ENCODE measurements at regions of chr12 and their contacts with region 1.

Region 1: GRCh38 chr12:15584366-15585041 is 204.7 kb downstream of the EPS8 start:
- DNase-seq: peak; percentile 21
- CTCF ChIP-seq: peak; percentile 55

Region 2: GRCh38 chr12:15276088-15276698 is 308.3 kb before region 1 on chr12:
- CTCF ChIA-PET with region 1: interaction called, 28 read pairs
- POLR2A ChIA-PET with region 1: no interaction called
- DNase-seq: peak; percentile 22
- CTCF ChIP-seq: peak; percentile 54

Region 3: DNA sequence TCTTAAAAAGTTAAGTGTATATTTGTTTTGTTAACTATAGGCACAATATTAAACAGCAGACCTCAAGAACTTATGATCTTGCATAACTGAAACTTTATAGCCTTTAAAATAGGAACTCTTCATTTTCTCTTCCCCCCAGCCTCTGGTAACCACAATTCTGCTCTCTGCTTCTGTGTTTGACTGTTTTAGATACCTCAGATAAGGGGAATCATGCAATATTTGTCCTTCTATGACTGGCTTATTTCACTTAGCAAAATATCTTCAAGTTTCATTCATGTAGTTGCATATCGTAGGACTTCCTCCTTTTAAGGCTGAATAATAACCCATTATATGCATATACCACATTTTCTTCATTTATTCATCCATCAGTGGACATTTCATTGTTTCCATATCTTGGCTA is 130.9 kb before region 1 on chr12:
- CTCF ChIA-PET with region 1: no interaction called
- POLR2A ChIA-PET with region 1: no interaction called
- DNase-seq: no peak
- CTCF ChIP-seq: no peak

Region 4: DNA sequence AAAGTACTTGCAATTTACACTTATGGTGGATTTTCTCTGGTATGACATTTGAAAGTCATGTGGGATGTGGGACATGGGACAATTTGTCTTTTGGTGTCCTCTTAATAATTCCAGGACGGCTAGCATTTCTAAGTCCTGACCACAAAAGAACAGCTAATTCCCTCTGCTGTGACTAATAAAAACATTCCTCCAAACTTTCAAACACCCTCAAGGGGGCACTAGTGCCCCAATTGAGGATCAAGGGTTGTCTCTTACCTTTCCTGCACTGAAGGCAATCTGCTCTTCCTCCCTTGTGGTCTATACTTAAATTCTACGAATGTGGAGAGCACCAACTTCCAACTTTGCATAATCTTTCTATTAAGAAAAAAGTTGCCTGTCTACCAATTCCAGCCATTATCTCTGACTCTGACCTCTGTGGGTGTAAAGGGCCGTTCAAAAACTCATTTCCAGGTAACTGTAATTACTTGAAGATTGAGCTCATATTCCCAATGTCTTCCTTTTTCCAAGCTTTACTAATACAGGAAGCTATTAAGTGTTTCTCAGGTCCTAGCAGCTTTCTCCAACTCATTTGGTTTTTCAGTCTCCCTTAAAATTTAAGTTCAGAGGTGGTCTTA is 52.0 kb before region 1 on chr12:
- CTCF ChIA-PET with region 1: interaction called, 328 read pairs
- POLR2A ChIA-PET with region 1: no interaction called
- DNase-seq: peak; percentile 47
- CTCF ChIP-seq: peak; percentile 64

Region 5: DNA sequence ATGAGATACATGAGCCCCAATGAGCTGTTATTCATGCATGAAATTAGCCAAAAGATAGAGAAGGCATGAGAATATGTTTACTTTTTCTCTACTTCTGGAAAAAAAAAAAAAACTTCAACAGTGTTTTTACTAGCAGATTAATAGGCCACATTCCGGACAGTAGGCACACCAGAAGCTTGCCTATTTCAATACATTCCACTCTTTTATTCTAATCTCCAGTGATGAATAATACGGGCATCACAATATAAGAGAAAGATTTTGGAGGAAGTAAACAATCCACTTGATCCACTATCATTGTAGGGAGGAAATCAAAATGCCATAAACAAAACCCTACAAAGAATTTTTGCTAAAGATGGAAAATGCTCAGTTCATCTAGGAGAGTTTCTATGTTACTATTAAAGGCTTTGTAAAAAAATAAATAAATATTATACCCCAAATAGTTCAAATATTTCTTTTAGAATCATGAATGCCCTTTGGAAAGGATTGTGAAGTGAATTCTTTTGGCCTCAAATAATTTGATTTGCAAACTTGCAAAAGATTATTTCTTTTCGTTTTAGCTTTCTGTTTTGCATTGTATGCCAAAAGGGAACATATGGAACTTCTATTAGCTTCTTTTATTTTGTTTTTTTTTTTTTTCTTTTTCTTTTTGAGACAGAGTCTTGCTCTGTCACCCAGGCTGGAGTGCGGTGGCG is 27.9 kb before region 1 on chr12:
- CTCF ChIA-PET with region 1: interaction called, 78 read pairs
- POLR2A ChIA-PET with region 1: no interaction called
- DNase-seq: no peak
- CTCF ChIP-seq: no peak

Region 6: GRCh38 chr12:15782667-15783066 is 198.2 kb after region 1 on chr12:
- CTCF ChIA-PET with region 1: no interaction called
- POLR2A ChIA-PET with region 1: no interaction called
- DNase-seq: no peak
- CTCF ChIP-seq: no peak

Region 7: GRCh38 chr12:15846887-15847286 is 262.4 kb after region 1 on chr12:
- CTCF ChIA-PET with region 1: interaction called, 208 read pairs
- POLR2A ChIA-PET with region 1: no interaction called
- DNase-seq: no peak
- CTCF ChIP-seq: no peak

Measured in GM10248 (cell line).